ENCODE measurements at regions of chr7 and their contacts with region 1.

Region 1: GRCh38 chr7:38796626-38797501 is 112.1 kb downstream of the VPS41 start:
- DNase-seq: peak; percentile 78
- H3K4me3 ChIP-seq: no peak overlapping the region
- H3K27ac ChIP-seq: no peak overlapping the region
- H3K4me1 ChIP-seq: no peaks in the 10 kb centered on the region
- H3K27me3 ChIP-seq: no peaks in the 10 kb centered on the region
- CTCF ChIP-seq: peak; percentile 47 to 54
- POLR2A ChIP-seq: no peak

Region 2: GRCh38 chr7:38806912-38807311 is 10.0 kb after region 1 on chr7:
- CTCF ChIA-PET with region 1: interaction called, 11 read pairs
- POLR2A ChIA-PET with region 1: no interaction called
- dilution Hi-C with region 1: no loop called
- intact Hi-C with region 1: no loop called
- DNase-seq: no peak
- H3K4me3 ChIP-seq: no peak overlapping the region
- H3K27ac ChIP-seq: no peak overlapping the region
- H3K4me1 ChIP-seq: no peaks in the 10 kb centered on the region
- H3K27me3 ChIP-seq: no peaks in the 10 kb centered on the region
- CTCF ChIP-seq: no peak
- POLR2A ChIP-seq: no peak

Region 3: DNA sequence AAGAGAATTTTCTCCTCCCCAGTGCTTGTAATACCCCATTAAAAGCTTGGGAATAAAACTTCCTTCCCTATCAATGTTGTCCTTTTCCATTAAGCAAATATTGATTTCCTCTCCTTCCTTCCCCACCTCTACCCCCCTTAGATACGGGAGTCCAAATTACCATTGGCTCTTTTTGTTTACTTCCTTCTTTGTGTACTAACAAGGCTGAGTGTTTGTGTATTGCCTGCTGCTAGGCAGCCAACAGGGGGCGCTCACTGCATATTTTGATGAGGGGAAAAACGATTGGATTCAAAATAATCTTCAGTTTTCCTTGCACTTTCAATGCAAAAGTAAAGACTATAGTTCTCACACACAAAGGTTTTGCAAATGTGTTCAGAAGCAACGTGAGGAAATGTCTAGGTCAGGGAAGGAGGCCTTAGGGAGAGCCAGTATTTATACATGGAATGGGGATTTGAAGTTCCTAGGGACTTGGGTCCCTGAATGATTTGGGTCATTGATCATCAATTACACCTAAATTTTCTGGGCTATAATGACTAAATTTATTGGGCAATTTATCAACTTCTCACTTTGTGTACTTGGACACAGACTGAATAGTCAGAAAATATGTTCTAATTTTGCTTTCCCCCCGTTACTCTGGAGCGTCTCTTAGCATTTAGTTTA is 135.8 kb after region 1 on chr7:
- CTCF ChIA-PET with region 1: interaction called, 5 read pairs
- POLR2A ChIA-PET with region 1: no interaction called
- dilution Hi-C with region 1: no loop called
- intact Hi-C with region 1: loop called (anchors 1 kb)
- DNase-seq: peak; percentile 45
- H3K4me3 ChIP-seq: no peak overlapping the region
- H3K27ac ChIP-seq: no peak overlapping the region
- H3K4me1 ChIP-seq: peaks cover 12% of the 10 kb centered on the region
- H3K27me3 ChIP-seq: no peaks in the 10 kb centered on the region
- CTCF ChIP-seq: peak; percentile 80 to 90
- POLR2A ChIP-seq: no peak

Region 4: GRCh38 chr7:39465055-39465929 is 668.4 kb after region 1 on chr7:
- CTCF ChIA-PET with region 1: interaction called, 5 read pairs
- POLR2A ChIA-PET with region 1: no interaction called
- dilution Hi-C with region 1: no loop called
- intact Hi-C with region 1: loop called (anchors 1 kb)
- DNase-seq: peak; percentile 26
- H3K4me3 ChIP-seq: no peak overlapping the region
- H3K27ac ChIP-seq: no peak overlapping the region
- H3K4me1 ChIP-seq: no peaks in the 10 kb centered on the region
- H3K27me3 ChIP-seq: peaks cover 3 to 12% of the 10 kb centered on the region in 2 experiments
- CTCF ChIP-seq: peak; percentile 43 to 61
- POLR2A ChIP-seq: no peak

Region 5: GRCh38 chr7:39517240-39517639 is 720.4 kb after region 1 on chr7:
- CTCF ChIA-PET with region 1: interaction called, 4 read pairs
- POLR2A ChIA-PET with region 1: no interaction called
- dilution Hi-C with region 1: no loop called
- intact Hi-C with region 1: loop called (anchors 1 kb)
- DNase-seq: no peak
- H3K4me3 ChIP-seq: no peak overlapping the region
- H3K27ac ChIP-seq: no peak overlapping the region
- H3K4me1 ChIP-seq: no peaks in the 10 kb centered on the region
- H3K27me3 ChIP-seq: peaks cover 2 to 3% of the 10 kb centered on the region in 2 experiments
- CTCF ChIP-seq: no peak
- POLR2A ChIP-seq: no peak

Measured in endothelial cell of umbilical vein (primary cell).